Activated CD8-positive, alpha-beta T cell treated with anti-CD3 and anti-CD28 coated beads for 36 hours (primary cell): ENCODE measurements at regions of chr1 and their contacts with region 1.

Region 1: DNA sequence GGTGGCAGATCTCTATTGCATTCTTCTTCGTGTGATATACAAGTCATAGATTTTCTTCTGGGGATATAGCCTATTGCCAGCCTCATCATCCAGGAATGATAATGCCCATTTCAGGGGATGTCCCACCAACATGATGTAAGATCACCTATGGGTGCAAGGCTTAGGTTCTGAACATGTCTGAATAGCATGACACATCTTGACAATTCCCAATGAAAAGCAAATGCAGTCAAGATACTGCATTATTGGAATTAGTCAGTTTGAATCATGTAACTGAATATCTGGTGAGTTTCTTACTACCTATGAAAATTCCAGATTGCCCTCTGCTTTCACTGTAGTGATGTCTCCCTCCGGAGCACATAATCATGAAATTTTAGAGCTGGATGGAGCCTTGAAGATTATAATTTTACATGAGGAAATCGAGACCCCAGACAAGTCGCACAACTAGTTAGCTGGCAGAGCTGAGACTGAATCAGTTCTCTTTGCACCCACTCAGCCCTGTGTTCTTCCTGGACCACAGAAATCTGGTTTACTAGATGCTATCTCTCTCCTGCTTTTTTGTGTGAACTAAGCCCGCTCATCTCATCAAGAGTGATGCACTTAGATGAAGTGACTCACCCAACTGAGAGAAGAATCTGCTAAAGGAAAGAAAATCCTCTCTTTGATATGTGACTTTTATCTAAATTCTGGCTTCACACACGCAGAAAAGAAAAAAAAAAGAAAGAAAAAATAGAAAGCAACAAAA is 65.0 kb downstream of the WDR64 start:
- DNase-seq: peak; percentile 58
- ATAC-seq: peak; percentile 95
- H3K4me3 Mint-ChIP-seq: no peak overlapping the region
- H3K27ac Mint-ChIP-seq: no peak overlapping the region
- H3K4me1 Mint-ChIP-seq: peaks cover 23% of the 10 kb centered on the region
- H3K27me3 Mint-ChIP-seq: no peaks in the 10 kb centered on the region
- CTCF ChIP-seq: no peak

Region 2: DNA sequence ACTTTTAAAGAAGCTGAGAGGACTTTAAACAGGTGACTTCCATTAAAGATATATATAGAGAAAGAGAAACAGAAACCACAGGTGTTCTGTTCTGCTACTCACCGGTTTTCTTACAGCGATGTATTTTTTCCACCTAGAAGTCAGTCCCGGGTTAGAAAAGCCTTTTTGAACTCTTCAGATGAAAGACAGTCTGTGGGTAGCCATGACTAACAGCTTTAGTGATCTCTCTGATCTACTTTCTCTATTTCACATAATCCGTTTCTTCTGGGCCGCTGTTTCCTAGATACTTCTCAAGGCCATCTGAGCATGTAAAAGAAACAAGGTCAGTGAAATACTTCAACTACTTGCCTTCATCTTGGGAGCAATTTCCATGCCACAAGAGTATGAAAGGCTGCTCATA is 39.9 kb before region 1 on chr1:
- CTCF ChIA-PET with region 1: no interaction called
- POLR2A ChIA-PET with region 1: interaction called, 3 read pairs
- intact Hi-C with region 1: loop called (anchors 5 kb)
- DNase-seq: peak; percentile 43
- ATAC-seq: peak; percentile 96
- H3K4me3 Mint-ChIP-seq: peak overlapping the region; percentile 37
- H3K27ac Mint-ChIP-seq: peak overlapping the region; percentile 67
- H3K4me1 Mint-ChIP-seq: peaks cover 32% of the 10 kb centered on the region
- H3K27me3 Mint-ChIP-seq: no peaks in the 10 kb centered on the region
- CTCF ChIP-seq: no peak